Calu3 (cell line): ENCODE measurements at regions of chrX and their contacts with region 1.

Region 1: DNA sequence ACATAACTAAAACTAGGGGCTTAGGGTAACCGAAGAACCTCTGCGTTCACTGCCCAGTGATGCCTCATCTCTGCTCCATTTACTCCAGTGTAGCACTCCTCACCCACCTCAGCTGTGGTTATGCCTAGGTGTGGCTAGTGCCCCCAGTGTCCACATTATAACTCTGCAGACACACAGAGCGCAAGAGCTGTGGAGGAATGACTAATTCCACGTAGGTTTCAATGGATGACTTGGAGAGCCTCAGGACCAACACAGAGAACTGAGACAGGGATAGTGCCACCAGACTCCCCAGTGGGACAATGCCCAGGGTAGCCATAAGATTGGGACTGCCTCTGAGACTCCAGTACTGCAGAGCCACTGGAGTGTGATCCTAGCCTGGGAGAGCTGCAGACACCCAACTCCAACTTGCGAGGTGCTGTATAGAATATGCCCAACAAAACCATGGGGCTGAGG is 542.4 kb upstream of the DIPK2B start:
- DNase-seq: peak; percentile 36
- H3K4me3 Mint-ChIP-seq: no peak overlapping the region
- H3K27ac Mint-ChIP-seq: peak overlapping the region; percentile 50
- H3K4me1 Mint-ChIP-seq: peaks cover 22% of the 10 kb centered on the region
- H3K27me3 Mint-ChIP-seq: no peaks in the 10 kb centered on the region
- CTCF ChIP-seq: no peak

Region 2: GRCh38 chrX:44343412-44344141 is 1399.5 kb before region 1 on chrX and contains the start of gene EFHC2:
- CTCF ChIA-PET with region 1: no interaction called
- intact Hi-C with region 1: no loop called
- DNase-seq: peak; percentile 50
- H3K4me3 Mint-ChIP-seq: peak within 1 kb of the TSS; percentile 80
- H3K27ac Mint-ChIP-seq: peak within 1 kb of the TSS; percentile 60
- H3K4me1 Mint-ChIP-seq: no peaks in the 10 kb centered on the region
- H3K27me3 Mint-ChIP-seq: no peaks in the 10 kb centered on the region
- CTCF ChIP-seq: no peak
- total RNA-seq, gene EFHC2: 0.95 and 1.7 TPM in 2 replicates

Region 3: DNA sequence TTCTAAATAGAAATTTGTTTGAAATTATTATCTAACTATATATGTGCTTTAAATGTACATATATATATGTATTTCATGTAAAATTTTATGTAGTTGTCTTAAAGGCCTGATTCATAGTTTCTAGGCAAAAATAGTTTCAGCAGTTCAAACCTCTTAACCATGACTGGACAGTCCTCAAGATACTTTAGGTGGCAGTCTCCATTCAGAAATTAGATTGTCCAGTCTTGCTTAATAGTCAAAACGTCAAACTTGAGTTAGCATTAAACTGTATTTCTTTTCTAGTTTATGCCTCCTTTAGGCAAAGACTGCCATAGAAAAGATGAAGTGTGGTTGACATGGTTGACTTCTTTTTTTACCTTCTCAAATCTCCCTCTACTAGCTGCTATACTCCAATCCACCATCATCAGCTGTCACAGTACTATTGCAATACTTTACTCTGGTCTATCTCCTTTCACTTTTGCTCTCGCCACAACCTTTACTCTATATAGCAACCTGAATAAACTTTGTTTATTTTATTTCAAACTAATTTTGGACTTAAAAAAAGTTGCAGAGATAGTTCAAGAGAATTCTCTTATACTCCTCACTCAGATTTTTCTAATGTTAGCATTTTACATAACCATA is 146.8 kb before region 1 on chrX:
- CTCF ChIA-PET with region 1: no interaction called
- intact Hi-C with region 1: loop called (anchors 10 kb)
- DNase-seq: no peak
- H3K4me3 Mint-ChIP-seq: no peak overlapping the region
- H3K27ac Mint-ChIP-seq: no peak overlapping the region
- H3K4me1 Mint-ChIP-seq: peaks cover 9% of the 10 kb centered on the region
- H3K27me3 Mint-ChIP-seq: no peaks in the 10 kb centered on the region
- CTCF ChIP-seq: no peak

Region 4: DNA sequence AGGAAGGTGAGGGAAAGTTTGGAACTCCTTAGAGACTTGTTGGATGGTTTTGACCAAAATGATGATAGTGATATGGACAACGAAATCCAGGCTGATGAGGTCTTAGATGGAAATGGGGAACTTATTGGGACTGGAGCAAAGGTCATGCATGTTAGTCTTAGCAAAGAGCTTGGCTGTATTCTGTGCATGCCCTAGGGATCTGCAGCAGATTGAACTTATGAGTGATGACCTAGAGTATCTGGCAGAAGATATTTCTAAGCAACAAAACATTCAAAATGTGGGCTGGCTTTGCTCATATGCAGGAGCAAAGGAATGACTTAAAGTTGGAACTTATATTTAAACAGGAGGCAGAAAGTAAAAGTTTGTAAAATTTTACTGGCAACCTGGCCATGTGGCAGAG is 53.1 kb before region 1 on chrX:
- CTCF ChIA-PET with region 1: no interaction called
- intact Hi-C with region 1: no loop called
- DNase-seq: no peak
- H3K4me3 Mint-ChIP-seq: no peak overlapping the region
- H3K27ac Mint-ChIP-seq: no peak overlapping the region
- H3K4me1 Mint-ChIP-seq: no peaks in the 10 kb centered on the region
- H3K27me3 Mint-ChIP-seq: no peaks in the 10 kb centered on the region
- CTCF ChIP-seq: no peak